ENCODE measurements at regions of chr19 and their contacts with region 1.

Region 1: GRCh38 chr19:4839186-4839585 is 7.7 kb upstream of the TICAM1 start:
- H3K4me3 ChIP-seq: no peak overlapping the region
- H3K27ac ChIP-seq: no peak overlapping the region
- H3K4me1 ChIP-seq: no peaks in the 10 kb centered on the region
- CTCF ChIP-seq: no peak

Region 2: DNA sequence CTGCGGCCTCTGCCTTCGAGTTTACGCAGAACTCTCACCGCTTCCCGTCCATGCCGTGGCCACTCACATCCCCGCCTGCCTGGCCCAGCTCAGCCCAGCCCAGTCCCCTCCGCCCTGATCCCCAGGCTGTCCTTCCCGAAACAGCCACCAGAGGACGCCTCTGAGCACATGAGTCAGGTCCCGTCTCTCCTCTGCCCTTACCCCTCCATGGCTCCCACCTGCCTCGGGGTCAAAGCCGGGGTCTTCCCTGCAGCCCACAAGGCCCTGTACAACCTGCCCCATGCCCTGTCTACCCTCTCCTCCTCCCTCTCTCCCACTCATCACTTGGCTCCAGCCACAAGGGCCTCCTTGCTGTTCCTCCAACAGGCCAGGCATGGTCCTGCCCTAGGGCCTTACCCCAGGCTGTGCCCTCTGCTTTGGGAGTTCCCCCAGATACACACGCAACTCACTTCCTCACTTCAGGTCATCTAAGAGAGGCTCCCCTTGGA is 271.6 kb before region 1 on chr19:
- CTCF ChIA-PET with region 1: no interaction called
- POLR2A ChIA-PET with region 1: no interaction called
- H3K4me3 ChIP-seq: no peak overlapping the region
- H3K27ac ChIP-seq: no peak overlapping the region
- H3K4me1 ChIP-seq: no peaks in the 10 kb centered on the region
- CTCF ChIP-seq: peak; percentile 92

Region 3: GRCh38 chr19:4851551-4852290 is 12.5 kb after region 1 on chr19:
- CTCF ChIA-PET with region 1: interaction called, 10 read pairs
- POLR2A ChIA-PET with region 1: no interaction called
- H3K4me3 ChIP-seq: no peak overlapping the region
- H3K27ac ChIP-seq: no peak overlapping the region
- H3K4me1 ChIP-seq: no peaks in the 10 kb centered on the region
- CTCF ChIP-seq: peak; percentile 92

Region 4: DNA sequence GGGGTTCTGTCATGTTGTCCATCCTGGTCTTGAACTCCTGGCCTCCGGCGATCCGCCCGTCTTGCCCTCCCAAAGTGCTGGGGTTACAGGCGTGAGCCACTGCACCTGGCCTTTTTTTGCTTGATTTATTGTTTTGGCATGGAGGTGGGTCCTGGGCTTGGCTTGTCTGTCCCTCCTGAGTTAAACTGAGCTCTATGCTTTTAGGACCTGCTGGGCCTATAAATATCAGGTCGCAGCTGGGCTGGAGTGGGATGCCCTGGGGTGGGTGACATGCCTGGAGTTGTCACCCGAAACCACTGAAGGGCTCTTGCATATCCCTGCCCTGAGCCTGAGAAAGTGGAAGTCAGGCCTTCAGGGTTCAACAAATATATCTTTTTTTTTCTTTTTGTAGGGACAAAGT is 58.0 kb after region 1 on chr19:
- CTCF ChIA-PET with region 1: no interaction called
- POLR2A ChIA-PET with region 1: no interaction called
- H3K4me3 ChIP-seq: no peak overlapping the region
- H3K27ac ChIP-seq: no peak overlapping the region
- H3K4me1 ChIP-seq: no peaks in the 10 kb centered on the region
- CTCF ChIP-seq: no peak

Region 5: GRCh38 chr19:4968462-4969291 is 129.5 kb after region 1 on chr19 and contains the start of gene KDM4B:
- CTCF ChIA-PET with region 1: no interaction called
- POLR2A ChIA-PET with region 1: no interaction called
- H3K4me3 ChIP-seq: peak within 1 kb of the TSS; percentile 71
- H3K27ac ChIP-seq: peak within 1 kb of the TSS; percentile 79; the same call in 1 of the 2 replicates
- H3K4me1 ChIP-seq: peaks cover 6% of the 10 kb centered on the region
- CTCF ChIP-seq: no peak